ENCODE measurements at regions of chr1 and their contacts with region 1.

Region 1: GRCh38 chr1:155001675-155002463 is 733 bp upstream of the ZBTB7B start:
- DNase-seq: peak; percentile 100
- ATAC-seq: peak; percentile 67
- H3K4me3 Mint-ChIP-seq: peak overlapping the region; percentile 96
- H3K27ac Mint-ChIP-seq: peak overlapping the region; percentile 94
- H3K4me1 Mint-ChIP-seq: peaks cover 54% of the 10 kb centered on the region
- H3K27me3 Mint-ChIP-seq: no peaks in the 10 kb centered on the region

Region 2: DNA sequence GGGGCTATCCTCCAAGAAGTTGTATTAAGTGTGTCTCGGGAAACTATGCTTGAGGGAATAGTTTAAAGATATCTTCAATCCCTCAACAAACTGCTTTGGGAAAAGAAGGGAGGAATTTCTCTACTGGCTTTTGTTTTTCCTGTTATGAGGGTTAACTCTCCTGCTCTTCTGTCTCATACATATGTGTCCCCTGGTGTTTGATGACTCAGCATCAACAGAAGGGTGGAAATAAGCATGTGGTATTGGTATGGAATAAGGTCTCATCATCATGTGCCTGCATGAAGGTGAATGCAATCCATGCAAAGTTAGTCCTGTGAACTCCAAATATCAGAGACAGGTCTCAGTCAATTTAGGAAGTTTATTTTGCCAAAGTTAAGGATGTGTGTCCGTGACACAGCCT is 366.7 kb before region 1 on chr1:
- CTCF ChIA-PET with region 1: no interaction called
- POLR2A ChIA-PET with region 1: no interaction called
- intact Hi-C with region 1: no loop called
- DNase-seq: no peak
- ATAC-seq: no peak
- H3K4me3 Mint-ChIP-seq: no peak overlapping the region
- H3K27ac Mint-ChIP-seq: no peak overlapping the region
- H3K4me1 Mint-ChIP-seq: no peaks in the 10 kb centered on the region
- H3K27me3 Mint-ChIP-seq: peaks cover 17% of the 10 kb centered on the region

Region 3: GRCh38 chr1:154936555-154937084 is 65.2 kb before region 1 on chr1 and contains the start of gene PMVK:
- CTCF ChIA-PET with region 1: interaction called, 9 read pairs
- POLR2A ChIA-PET with region 1: interaction called, 3 read pairs
- intact Hi-C with region 1: loop called (anchors 1 kb)
- DNase-seq: peak; percentile 97
- ATAC-seq: peak; percentile 80
- H3K4me3 Mint-ChIP-seq: peak within 1 kb of the TSS; percentile 95
- H3K27ac Mint-ChIP-seq: peak within 1 kb of the TSS; percentile 96
- H3K4me1 Mint-ChIP-seq: peaks cover 54% of the 10 kb centered on the region
- H3K27me3 Mint-ChIP-seq: no peaks in the 10 kb centered on the region
- total RNA-seq, gene PMVK: 17.0 to 36.9 TPM

Region 4: GRCh38 chr1:154982897-154983648 is 18.8 kb before region 1 on chr1 and contains the start of gene FLAD1:
- CTCF ChIA-PET with region 1: interaction called, 82 read pairs
- POLR2A ChIA-PET with region 1: interaction called, 10 read pairs
- intact Hi-C with region 1: loop called (anchors 1 kb)
- DNase-seq: peak; percentile 97
- ATAC-seq: peak; percentile 99
- H3K4me3 Mint-ChIP-seq: no peak within 1 kb of the TSS
- H3K27ac Mint-ChIP-seq: no peak within 1 kb of the TSS
- H3K4me1 Mint-ChIP-seq: peaks cover 21% of the 10 kb centered on the region
- H3K27me3 Mint-ChIP-seq: no peaks in the 10 kb centered on the region
- total RNA-seq, gene FLAD1: 38.0 to 42.4 TPM

Region 5: GRCh38 chr1:155084722-155085503 is 83.0 kb after region 1 on chr1:
- CTCF ChIA-PET with region 1: interaction called, 4 read pairs
- POLR2A ChIA-PET with region 1: interaction called, 3 read pairs
- intact Hi-C with region 1: loop called (anchors 1 to 2 kb)
- DNase-seq: peak; percentile 97
- ATAC-seq: peak; percentile 78
- H3K4me3 Mint-ChIP-seq: peak overlapping the region; percentile 82
- H3K27ac Mint-ChIP-seq: peak overlapping the region; percentile 91
- H3K4me1 Mint-ChIP-seq: peaks cover 36% of the 10 kb centered on the region
- H3K27me3 Mint-ChIP-seq: peaks cover 27% of the 10 kb centered on the region

Region 6: DNA sequence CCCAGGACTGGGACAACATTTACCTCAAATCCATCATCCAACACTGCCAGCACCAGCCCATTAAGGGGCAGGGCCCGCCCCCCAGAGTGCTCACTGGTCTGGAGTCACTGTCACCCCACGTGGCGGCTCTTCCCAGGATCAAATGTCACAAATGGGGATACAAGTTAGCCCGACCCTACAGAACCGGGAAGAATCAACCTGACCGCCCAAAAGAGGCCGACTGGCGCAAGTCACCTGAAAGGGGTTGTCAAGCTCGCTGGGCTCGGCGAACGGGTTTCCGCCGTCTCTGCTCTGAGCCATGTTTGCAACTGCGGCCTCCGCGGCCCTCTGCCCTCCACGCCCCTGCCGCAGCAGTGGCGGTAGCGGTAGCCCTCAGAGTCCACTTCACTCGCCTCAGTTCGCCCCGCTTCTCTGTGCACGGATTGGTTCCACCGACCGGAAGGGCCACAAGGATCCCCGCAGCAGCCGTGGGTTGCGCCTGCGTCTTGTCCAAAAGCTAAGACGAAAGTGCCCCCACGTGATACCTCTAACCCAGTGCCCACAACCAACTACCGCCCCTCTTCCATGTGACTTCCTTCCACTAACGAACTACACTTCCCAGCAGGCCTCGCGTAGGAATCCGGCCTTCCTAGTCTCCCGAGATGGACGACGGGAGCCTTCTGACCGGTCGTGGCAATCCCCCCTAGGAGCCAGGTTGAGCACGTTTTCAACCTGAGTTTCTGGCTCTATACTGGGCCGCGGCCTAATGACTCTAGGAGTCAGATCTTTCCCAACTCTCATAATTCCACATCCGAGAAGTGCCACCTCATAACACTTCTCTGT is 260.2 kb after region 1 on chr1 and contains the start of gene SCAMP3:
- CTCF ChIA-PET with region 1: no interaction called
- POLR2A ChIA-PET with region 1: no interaction called
- intact Hi-C with region 1: loop called in 1 of 2 experiments (anchors 5 kb)
- DNase-seq: peak; percentile 93
- ATAC-seq: peak; percentile 95
- H3K4me3 Mint-ChIP-seq: peak within 1 kb of the TSS; percentile 98
- H3K27ac Mint-ChIP-seq: peak within 1 kb of the TSS; percentile 91
- H3K4me1 Mint-ChIP-seq: peaks cover 27% of the 10 kb centered on the region
- H3K27me3 Mint-ChIP-seq: no peaks in the 10 kb centered on the region
- total RNA-seq, gene SCAMP3: 82.0 to 95.5 TPM

Region 7: DNA sequence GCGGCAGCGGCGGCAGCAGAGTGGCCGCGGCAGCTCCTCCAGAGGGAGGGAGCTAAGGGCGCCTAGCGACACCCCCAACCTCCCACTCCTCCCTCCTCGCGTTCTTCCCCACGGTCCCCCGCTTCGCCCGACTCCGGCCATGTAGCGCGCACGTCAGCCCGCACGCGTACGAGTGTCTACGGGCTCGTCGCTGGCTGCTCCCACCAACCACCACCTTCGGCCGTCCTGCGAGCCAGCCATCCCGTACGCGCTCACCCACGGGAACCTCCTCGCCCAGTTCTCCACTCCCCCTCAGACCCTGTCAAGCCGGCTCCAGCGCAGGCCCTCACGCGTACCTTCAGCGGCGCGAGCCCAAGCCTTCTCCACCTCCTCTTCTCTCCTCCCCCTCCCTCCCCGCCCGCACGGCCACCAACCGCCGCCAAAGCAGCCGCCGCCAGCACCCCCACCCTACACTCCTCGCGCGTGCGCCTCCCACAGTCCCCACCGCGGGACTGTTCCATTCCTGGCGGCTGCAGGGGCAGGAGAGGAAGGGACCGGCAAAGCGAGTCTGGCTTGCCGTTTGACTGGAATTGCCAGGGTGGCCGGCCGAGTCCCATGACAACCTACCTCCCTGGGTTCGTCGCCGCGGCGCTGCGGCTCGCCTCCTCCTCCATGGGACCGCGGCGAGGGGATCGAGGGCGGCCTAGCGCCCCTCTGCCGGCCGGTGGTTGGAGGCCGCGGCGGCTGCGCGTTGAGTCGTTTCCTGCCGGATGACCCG is 686.6 kb after region 1 on chr1 and contains the start of gene YY1AP1:
- CTCF ChIA-PET with region 1: no interaction called
- POLR2A ChIA-PET with region 1: no interaction called
- intact Hi-C with region 1: no loop called
- DNase-seq: peak; percentile 95
- ATAC-seq: peak; percentile 86
- H3K4me3 Mint-ChIP-seq: peak within 1 kb of the TSS; percentile 97
- H3K27ac Mint-ChIP-seq: peak within 1 kb of the TSS; percentile 94
- H3K4me1 Mint-ChIP-seq: peaks cover 29% of the 10 kb centered on the region
- H3K27me3 Mint-ChIP-seq: no peaks in the 10 kb centered on the region
- total RNA-seq, gene YY1AP1: 59.6 to 76.0 TPM

Measured in activated CD4-positive, alpha-beta T cell treated with anti-CD3 and anti-CD28 coated beads for 36 hours (primary cell).